HEK293 (cell line): ENCODE measurements at regions of chr14 and their contacts with region 1.

Region 1: DNA sequence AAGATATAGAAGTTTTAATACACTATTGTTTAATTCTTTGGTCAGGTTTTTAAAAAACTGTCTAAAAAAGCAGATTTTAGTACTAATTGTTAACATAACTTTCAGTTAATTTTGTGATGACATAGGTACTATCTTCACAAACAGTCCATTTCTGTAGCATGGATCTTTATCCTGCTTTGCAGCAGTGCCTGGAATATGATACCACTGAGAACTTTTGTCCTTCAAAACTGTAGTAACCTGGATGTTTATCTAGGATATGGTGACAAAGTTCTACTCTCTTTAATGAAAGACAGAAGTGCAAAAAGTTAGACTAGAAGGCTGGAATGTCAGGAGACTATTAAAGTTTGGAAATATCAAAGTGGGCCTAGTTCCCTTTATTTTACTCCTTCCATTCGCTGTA is 159.9 kb downstream of the SYNE2 start:
- H3K4me3 ChIP-seq: no peak overlapping the region
- H3K27ac ChIP-seq: no peak overlapping the region
- H3K4me1 ChIP-seq: no peaks in the 10 kb centered on the region; the same call in 1 of the 2 replicates
- CTCF ChIP-seq: no peak

Region 2: DNA sequence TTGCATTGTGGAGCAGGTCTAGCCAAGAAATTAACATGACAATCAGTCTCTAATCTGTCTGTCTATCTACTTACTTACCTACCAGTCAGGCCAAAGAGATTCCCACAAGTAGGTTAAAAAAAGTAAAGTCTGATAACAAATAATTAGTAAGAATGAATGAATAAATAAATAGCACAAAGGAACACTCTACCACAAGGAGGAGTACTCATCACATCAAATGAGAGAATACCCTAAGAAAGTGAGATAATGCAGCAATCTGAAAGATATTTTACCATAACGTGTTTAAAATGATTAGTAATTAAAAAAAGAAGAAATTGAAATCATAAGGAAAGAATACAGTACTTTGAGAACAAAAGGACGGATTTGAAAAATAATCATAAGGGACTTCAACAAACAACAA is 27.3 kb after region 1 on chr14:
- CTCF ChIA-PET with region 1: no interaction called
- POLR2A ChIA-PET with region 1: no interaction called
- H3K4me3 ChIP-seq: no peak overlapping the region
- H3K27ac ChIP-seq: no peak overlapping the region
- H3K4me1 ChIP-seq: no peaks in the 10 kb centered on the region; the same call in 1 of the 2 replicates
- CTCF ChIP-seq: 0 out of 2 replicates have a peak, but pooled peaks have one; percentile 10

Region 3: DNA sequence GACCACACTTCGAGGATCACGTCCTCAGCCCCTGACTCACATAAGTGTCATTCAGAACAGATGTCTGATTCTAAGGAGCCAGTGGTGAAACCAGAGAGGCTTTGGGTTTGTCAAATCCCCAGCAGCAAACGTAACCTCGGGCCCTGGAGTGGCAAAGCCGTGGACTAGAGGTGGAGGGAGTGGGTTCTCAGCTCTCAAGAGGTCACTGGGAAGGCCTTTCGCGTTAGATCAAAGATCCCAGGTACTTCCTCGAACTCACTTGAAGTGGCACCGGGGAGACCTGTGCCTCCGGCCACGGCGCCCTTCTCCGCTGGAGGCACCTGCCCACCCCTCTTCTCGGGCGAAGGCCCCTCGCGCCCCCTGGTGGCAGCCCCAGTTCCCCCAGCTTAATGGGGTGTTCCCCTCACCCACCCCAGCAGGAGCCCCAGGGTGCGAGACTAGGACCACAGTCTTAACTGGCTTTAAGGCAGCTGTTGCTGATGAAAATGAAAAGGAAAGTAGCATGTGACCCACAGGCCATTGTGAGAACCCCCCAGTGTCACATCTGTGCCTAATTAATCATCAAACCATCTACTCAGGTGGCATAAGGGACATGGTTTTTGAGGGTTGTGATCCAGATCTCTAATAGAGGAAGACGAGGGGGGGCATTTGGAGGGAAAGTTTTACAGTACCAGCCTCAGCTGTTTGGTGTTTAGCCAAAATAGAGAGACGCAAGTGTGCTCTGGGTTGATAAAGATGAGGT is 282.1 kb after region 1 on chr14:
- CTCF ChIA-PET with region 1: interaction called, 18 read pairs
- POLR2A ChIA-PET with region 1: no interaction called
- H3K4me3 ChIP-seq: 0 out of 2 replicates have a peak overlapping the region, but pooled peaks have one; percentile 16
- H3K27ac ChIP-seq: no peak overlapping the region
- H3K4me1 ChIP-seq: no peaks in the 10 kb centered on the region
- CTCF ChIP-seq: peak; percentile 34; the same call in 1 of the 2 replicates

Region 4: DNA sequence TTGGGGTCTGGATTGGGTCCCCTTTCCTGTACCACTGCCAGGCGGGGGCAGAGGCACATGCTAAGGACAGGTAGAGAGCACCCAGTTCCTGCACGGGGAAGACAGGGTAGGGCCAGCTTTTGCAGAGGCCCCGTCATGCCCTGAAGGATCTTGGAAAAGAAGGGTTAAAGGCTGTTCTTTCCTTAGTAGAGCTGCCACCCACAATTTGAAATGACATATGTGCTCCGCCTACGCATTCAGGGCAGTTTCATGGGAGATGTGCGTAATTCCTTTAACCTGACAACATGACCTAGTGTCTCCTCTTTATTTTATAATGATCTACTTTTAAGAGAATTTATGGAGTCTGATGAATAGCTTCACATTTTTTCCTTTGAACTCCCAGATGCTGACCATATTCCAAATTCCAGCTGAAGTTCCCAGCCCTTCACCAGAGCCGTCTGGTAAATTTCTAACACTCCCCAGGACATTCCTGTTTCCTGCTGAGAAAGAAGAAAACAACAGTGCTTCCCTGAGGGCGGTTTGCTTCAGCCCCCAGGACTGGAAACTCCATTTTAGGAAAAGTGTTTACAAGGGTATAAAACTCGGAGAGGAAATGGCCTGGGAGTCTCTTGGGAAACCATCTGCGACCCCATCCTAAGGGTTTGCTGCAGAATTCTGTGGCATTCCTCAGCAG is 632.6 kb after region 1 on chr14:
- CTCF ChIA-PET with region 1: no interaction called
- POLR2A ChIA-PET with region 1: no interaction called
- H3K4me3 ChIP-seq: no peak overlapping the region
- H3K27ac ChIP-seq: no peak overlapping the region
- H3K4me1 ChIP-seq: peaks cover 5% of the 10 kb centered on the region; the same call in 1 of the 2 replicates
- CTCF ChIP-seq: no peak